Activated CD4-positive, alpha-beta T cell treated with anti-CD3 and anti-CD28 coated beads, Interleukin-2, amount 10 ng/mL, durations not matched to agents 24 days and 14 days (primary cell): ENCODE measurements at regions of chr1 and their contacts with region 1.

Region 1: DNA sequence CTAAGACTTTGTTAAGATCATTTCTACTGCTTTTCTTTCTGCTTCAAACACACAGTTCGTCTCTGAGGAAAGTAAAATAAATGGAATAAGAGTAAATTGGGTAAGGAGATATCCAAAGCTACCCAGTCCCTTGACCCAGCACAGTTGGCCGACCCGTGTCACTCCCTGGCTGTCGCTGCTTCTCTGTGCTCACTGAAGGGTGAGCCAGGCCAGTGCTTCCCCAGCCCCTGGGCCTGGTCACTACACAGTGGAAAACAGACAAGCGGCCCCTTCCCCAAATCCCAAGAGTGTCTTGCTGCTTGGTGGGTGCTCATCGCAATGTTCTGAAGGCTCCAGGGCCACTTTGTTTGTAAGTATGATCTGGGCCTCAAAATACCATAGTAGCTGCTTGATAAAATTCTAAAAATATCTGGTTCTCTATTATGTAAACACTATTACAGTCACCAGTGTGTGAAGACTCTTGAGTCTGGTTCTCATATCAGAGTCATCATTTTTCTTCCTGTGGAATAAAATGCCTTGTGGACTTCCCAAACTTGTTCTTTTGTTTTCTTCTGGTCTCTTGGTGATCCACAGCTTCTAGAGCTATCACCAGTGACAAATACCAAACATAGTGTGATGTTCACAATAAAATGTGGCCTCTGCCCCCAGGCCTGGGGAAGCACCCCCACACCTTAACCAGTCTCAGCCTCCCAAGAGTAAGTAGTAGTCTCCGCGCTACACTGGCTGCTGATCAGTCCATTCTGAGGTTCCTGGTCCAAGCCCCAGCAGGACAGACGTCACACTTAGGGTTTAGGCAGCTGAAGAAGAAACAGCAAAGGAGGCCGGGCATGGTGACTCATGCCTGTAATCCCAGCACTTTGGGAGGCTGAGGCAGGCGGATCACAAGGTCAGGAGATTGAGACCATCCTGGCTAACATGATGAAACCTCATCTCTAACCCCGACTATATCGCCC is 106.2 kb downstream of the DHRS3 start:
- DNase-seq: peak; percentile 58
- H3K4me3 Mint-ChIP-seq: peak overlapping the region; percentile 82
- H3K27ac Mint-ChIP-seq: peak overlapping the region; percentile 99
- H3K4me1 Mint-ChIP-seq: peaks cover 44% of the 10 kb centered on the region
- H3K27me3 Mint-ChIP-seq: no peaks in the 10 kb centered on the region

Region 2: DNA sequence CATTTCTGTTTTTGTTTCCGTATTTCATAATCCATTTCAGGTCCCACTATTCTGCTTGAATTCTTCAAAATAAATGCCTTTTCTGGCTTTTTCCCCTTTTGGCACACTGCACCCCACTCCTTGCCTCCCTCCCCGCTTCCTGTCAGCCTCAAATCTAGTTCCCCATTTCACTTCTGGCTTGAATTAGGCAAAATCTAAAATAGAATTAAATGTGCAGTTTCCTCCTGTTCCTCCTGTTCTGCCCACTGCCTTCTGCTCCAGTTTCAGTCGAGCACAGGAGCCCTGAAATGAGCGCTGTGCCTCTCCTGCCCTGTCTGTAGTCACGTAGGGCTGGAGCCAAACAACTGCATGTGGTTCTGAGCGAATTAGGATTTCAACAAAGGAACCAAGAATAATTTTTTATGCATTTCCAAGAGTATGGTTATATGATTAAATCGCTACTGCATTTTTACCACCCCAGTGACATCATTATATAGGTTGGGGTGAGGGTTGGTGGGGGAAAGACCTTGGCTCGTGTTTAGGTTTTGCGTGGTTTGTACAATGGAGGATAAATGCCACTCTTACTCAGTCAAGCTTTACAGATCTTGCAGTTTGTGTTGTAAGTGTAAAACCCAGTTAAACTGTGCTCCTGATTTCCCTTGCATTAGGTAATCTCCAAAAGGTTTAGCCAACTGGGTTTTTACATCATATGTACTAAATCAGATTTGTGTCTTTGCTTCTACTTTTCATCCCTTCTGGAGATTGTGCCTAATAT is 167.0 kb before region 1 on chr1:
- intact Hi-C with region 1: loop called (anchors 5 kb)
- DNase-seq: peak; percentile 67
- H3K4me3 Mint-ChIP-seq: peak overlapping the region; percentile 71
- H3K27ac Mint-ChIP-seq: peak overlapping the region; percentile 85
- H3K4me1 Mint-ChIP-seq: peaks cover 42% of the 10 kb centered on the region
- H3K27me3 Mint-ChIP-seq: no peaks in the 10 kb centered on the region

Region 3: DNA sequence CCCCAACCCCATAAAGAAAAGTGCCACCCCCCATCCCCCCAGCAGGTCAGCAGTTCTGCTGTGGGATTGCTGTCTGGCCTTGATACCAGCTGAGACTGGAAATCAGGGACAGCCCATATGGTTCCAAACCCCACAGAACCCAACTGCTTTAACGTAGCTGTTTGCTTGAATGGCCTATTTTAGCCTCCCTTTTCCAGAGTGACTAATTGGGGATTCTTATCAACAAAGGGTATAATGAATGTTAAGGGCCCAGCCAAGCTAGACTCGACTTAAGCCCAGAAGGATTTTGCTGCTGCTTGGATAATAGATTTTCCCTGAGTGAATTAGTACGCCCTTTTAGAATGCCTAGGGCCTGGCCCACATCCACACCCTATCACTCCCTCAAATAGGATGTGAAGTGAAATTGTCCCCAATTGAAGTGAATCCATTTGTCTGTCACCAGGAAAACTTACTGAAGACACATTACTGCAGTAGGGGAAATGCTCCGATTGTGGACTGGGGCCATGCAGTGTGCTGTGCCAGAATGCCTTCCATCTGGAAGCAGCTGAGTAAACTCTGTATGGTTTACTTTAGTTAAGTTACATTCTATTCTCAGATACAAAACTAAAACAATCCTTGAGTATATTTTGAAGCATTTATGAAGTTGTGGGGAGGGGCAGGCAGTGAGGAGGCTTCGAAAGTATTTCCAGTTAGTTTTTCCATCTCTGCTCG is 50.7 kb before region 1 on chr1:
- intact Hi-C with region 1: no loop called
- DNase-seq: no peak
- H3K4me3 Mint-ChIP-seq: no peak overlapping the region
- H3K27ac Mint-ChIP-seq: no peak overlapping the region
- H3K4me1 Mint-ChIP-seq: peaks cover 20% of the 10 kb centered on the region
- H3K27me3 Mint-ChIP-seq: no peaks in the 10 kb centered on the region

Region 4: DNA sequence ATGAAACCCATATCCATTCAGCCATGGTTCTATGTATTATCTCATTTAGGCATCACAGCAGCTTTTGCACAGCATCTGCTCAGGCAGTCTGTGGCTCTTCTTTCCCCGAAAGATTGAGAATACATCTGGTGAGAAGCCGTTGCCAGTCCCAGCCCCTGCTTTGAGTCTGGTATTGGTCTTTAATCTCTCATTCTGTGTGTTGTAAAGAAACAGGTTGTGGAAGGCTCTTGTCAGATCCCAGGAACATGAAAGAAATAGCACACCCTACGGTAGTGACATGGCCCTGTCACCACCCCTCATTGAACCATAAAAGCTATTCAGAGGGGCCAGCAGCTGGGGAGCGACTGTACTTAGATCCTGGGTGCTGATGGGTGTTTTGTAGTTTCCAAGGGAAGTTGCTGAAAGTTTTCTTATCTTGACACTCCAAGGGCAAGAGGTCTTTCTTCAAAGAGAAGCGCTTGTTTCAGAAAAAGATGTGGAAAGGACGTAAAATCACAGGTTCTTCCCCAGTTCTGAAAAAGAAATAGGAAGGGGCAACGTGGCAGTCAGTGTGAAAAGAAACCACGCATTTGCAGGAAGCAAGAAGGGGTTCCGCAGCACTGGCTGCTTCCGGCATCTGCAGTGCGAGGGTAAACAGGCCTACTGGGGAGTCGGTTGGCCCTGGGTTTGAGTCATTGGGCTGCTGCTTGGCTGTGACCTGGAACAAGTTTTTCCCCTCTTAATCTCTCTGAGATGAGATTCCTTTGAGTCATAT is 38.8 kb before region 1 on chr1:
- intact Hi-C with region 1: loop called (anchors 1 kb)
- DNase-seq: peak; percentile 87
- H3K4me3 Mint-ChIP-seq: peak overlapping the region; percentile 77
- H3K27ac Mint-ChIP-seq: peak overlapping the region; percentile 94
- H3K4me1 Mint-ChIP-seq: peaks cover 71% of the 10 kb centered on the region
- H3K27me3 Mint-ChIP-seq: no peaks in the 10 kb centered on the region

Region 5: GRCh38 chr1:12477936-12478611 is 33.7 kb before region 1 on chr1:
- intact Hi-C with region 1: loop called (anchors 1 kb)
- DNase-seq: peak; percentile 66
- H3K4me3 Mint-ChIP-seq: peak overlapping the region; percentile 46
- H3K27ac Mint-ChIP-seq: peak overlapping the region; percentile 88
- H3K4me1 Mint-ChIP-seq: peaks cover 80% of the 10 kb centered on the region
- H3K27me3 Mint-ChIP-seq: no peaks in the 10 kb centered on the region